Panc1 (cell line): ENCODE measurements at regions of chr3 and their contacts with region 1.

Region 1: DNA sequence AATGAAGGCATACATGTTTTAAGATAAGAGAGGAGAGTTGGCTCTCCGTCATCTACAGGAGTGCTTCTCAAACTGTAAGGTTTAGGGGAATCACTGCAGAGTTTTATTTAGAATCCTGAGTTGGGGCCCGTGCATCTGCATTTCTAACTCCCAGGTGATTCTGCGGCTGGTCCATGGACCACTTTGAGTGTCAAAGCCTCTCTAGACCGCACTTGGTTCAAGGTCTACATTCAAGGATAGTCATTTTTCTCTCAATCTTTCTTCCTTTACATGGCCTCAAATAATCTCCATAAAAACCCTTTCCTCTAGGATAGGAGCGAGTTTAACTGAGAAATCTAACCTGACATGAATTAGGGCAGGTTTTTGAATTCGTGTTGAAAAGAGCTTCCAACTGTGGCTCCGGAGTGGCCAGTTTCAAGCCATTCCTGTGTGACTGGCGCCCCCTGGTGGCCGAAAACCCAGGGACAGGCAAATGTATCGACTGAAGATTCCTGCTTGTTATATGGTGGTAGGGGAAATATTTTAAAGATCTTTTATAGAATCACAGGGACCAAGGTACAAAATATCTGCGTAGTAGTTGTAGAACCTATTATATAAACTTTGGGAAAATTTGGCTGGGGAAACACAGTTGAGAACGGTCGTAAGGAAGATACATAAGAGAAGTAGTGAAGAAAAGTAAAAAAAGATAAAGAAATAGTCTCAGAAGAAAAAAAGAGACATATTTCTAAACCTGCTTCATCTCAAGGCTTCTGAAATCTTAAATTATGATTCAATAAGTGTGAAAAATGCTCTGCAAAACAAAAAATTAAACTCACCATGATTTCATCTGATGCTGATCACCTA is 11.9 kb downstream of the GABRR3 start:
- DNase-seq: peak; percentile 33
- ATAC-seq: peak; percentile 92
- H3K4me3 ChIP-seq: no peak overlapping the region
- H3K27ac ChIP-seq: no peak overlapping the region
- H3K4me1 ChIP-seq: 0 out of 2 replicates have a peak, but pooled peaks cover 4% of the 10 kb centered on the region
- H3K27me3 ChIP-seq: peaks cover 4% of the 10 kb centered on the region; the same call in 1 of the 2 replicates
- CTCF ChIP-seq: peak; percentile 97

Region 2: DNA sequence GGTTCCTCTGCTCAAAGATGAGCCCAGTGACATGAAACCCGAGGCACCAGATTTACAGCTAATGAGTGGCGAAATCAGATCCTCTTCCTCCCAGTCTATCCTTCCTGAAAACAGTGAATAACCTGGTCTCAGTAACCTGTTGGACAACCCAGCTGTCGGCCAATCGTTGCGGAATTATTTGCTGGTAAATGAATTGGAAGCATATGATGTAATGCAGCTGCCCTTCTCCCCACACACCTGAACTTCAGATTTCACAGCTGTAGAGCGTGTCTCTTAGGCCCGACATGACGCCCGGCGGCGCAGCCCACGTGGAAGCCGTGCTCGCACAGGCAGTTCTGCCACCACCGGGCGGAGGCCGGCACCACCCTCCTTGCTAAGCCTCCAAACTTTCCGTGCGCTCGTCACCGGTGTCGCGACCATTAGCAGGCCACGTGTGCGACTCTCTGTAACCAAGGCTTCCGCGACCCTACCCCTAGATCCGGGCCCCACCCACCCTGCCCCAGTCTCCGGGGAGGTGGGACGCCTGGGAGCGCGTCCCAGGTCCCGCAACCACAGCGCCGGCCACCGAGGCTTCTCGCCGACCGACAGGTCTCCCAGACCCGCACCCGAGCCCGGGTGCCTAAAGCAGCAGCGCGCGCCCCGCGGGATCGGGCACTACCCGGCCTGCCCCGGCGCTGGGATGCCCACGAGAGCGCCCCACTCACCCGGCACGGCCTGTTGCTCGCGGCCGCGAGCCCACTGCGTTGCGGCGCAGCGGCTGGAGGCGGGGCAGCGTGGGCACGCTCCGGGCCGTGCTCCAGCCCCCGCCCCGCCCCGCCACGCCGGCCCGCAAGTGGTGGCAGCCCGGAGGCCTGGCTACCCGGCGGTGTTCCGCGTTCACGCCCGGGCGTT is 51.3 kb before region 1 on chr3 and contains the start of gene RIOX2:
- CTCF ChIA-PET with region 1: no interaction called
- POLR2A ChIA-PET with region 1: no interaction called
- in situ Hi-C with region 1: no loop called
- intact Hi-C with region 1: loop called (anchors 5 kb)
- DNase-seq: peak; percentile 20
- ATAC-seq: peak; percentile 100
- H3K4me3 ChIP-seq: peak within 1 kb of the TSS; percentile 69 to 74
- H3K27ac ChIP-seq: peak within 1 kb of the TSS; percentile 84
- H3K4me1 ChIP-seq: peaks cover 20% of the 10 kb centered on the region
- H3K27me3 ChIP-seq: no peaks in the 10 kb centered on the region
- CTCF ChIP-seq: no peak
- total RNA-seq, gene RIOX2: 44.1 TPM

Region 3: GRCh38 chr3:98240131-98240530 is 216.9 kb after region 1 on chr3:
- CTCF ChIA-PET with region 1: no interaction called
- POLR2A ChIA-PET with region 1: no interaction called
- in situ Hi-C with region 1: no loop called
- intact Hi-C with region 1: no loop called
- DNase-seq: no peak
- ATAC-seq: no peak
- H3K4me3 ChIP-seq: no peak overlapping the region
- H3K27ac ChIP-seq: no peak overlapping the region
- H3K4me1 ChIP-seq: no peaks in the 10 kb centered on the region
- H3K27me3 ChIP-seq: no peaks in the 10 kb centered on the region
- CTCF ChIP-seq: no peak